Activated CD8-positive, alpha-beta memory T cell treated with anti-CD3 and anti-CD28 coated beads, Interleukin-2, amount 10 ng/mL, durations not matched to agents 7 days and 5 days (primary cell): ENCODE measurements at regions of chr15 and their contacts with region 1.

Region 1: DNA sequence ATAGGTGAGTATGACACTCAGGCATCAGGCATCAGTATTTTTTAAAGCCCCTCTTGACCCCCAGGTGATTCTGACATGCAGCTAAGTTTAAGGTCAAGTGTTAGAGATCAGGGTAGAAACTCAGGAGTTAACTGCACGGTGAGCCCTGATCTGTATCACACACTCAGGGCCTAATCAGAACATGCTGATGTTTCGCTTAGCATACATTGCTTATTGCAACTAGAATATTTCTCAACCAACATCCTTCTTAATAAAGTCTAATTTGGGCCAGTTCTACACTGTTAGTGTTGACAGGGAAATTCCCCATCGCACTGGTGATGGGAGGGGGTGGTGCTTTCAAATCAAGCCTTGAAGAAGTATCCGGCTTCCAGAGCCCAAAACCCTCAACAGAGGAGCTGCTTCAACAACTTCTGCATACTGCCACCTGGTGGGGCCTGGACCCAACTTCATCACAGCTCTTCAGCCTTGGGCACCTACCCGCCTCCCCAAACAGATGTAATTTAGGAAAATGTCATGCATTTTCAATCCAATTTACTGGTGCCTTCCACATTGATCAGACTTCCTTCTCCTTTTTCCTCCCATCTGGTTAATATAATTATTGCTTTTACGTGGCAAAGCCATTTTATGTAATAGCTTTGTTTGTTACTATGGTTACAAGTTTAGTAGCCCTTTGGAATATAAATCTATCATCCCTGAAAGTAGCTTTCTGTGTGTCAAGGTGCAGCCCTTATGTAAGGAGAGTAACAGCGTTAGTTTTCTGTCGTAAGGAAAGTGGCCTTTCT is 312.2 kb downstream of the RORA start:
- DNase-seq: peak; percentile 89
- ATAC-seq: peak; percentile 94
- H3K4me3 Mint-ChIP-seq: no peak overlapping the region
- H3K27ac Mint-ChIP-seq: peak overlapping the region; percentile 30
- H3K4me1 Mint-ChIP-seq: peaks cover 13% of the 10 kb centered on the region
- H3K27me3 Mint-ChIP-seq: peaks cover 4% of the 10 kb centered on the region

Region 2: GRCh38 chr15:60507596-60508424 is 409.1 kb before region 1 on chr15:
- CTCF ChIA-PET with region 1: interaction called, 11 read pairs
- DNase-seq: peak; percentile 74
- ATAC-seq: peak; percentile 86
- H3K4me3 Mint-ChIP-seq: peak overlapping the region; percentile 48
- H3K27ac Mint-ChIP-seq: peak overlapping the region; percentile 82
- H3K4me1 Mint-ChIP-seq: peaks cover 56% of the 10 kb centered on the region
- H3K27me3 Mint-ChIP-seq: no peaks in the 10 kb centered on the region

Region 3: GRCh38 chr15:60592371-60593169 is 324.3 kb before region 1 on chr15:
- CTCF ChIA-PET with region 1: interaction called, 75 read pairs
- DNase-seq: peak; percentile 92
- ATAC-seq: peak; percentile 86
- H3K4me3 Mint-ChIP-seq: peak overlapping the region; percentile 86
- H3K27ac Mint-ChIP-seq: peak overlapping the region; percentile 82
- H3K4me1 Mint-ChIP-seq: peaks cover 51% of the 10 kb centered on the region
- H3K27me3 Mint-ChIP-seq: peaks cover 14% of the 10 kb centered on the region

Region 4: GRCh38 chr15:60905587-60905986 is 11.3 kb before region 1 on chr15:
- CTCF ChIA-PET with region 1: interaction called, 10 read pairs
- DNase-seq: no peak
- ATAC-seq: peak; percentile 63
- H3K4me3 Mint-ChIP-seq: no peak overlapping the region
- H3K27ac Mint-ChIP-seq: no peak overlapping the region
- H3K4me1 Mint-ChIP-seq: peaks cover 13% of the 10 kb centered on the region
- H3K27me3 Mint-ChIP-seq: peaks cover 29% of the 10 kb centered on the region